ENCODE measurements at regions of chr18 and their contacts with region 1.

Region 1: DNA sequence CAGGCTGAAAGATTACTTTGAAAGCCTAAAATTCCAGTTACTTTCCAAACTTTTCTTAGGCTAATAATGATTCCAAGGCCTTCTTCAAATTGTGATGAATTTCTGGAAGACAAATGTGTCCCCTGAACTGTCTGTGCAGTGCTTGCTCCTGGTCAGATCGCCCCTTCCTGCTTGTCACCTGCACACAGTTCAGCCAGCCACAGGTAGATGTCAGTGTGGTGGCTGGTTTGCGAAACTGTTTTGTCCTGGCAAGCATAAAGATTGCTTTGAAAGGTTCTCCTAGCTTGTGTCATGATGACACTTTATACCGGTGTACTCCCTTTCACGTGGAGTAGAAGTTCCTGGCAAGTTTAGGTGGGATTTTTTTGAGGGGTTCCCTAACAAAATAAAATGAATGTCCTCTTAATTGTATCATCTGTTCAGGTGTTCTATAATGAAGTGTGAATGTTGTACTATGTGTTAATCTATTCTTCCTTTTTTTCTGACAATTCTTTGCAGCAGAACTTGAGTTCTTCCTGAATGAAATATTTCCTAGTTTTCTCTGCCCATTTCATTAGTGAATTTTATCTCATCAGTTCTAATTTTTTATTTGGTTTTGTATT is 298.8 kb downstream of the ZNF407 start:
- DNase-seq: peak; percentile 9
- ATAC-seq: peak; percentile 43
- H3K4me3 ChIP-seq: no peak overlapping the region
- H3K4me3 Mint-ChIP-seq: no peak overlapping the region
- H3K27ac ChIP-seq: no peak overlapping the region
- H3K27ac Mint-ChIP-seq: no peak overlapping the region
- H3K4me1 ChIP-seq: no peaks in the 10 kb centered on the region
- H3K4me1 Mint-ChIP-seq: no peaks in the 10 kb centered on the region
- H3K27me3 ChIP-seq: no peaks in the 10 kb centered on the region
- H3K27me3 Mint-ChIP-seq: no peaks in the 10 kb centered on the region
- CTCF ChIP-seq: peak; percentile 15

Region 2: GRCh38 chr18:74963820-74964446 is 67.4 kb after region 1 on chr18:
- CTCF ChIA-PET with region 1: interaction called, 10 read pairs
- POLR2A ChIA-PET with region 1: no interaction called
- intact Hi-C with region 1: no loop called
- DNase-seq: no peak
- ATAC-seq: no peak
- H3K4me3 ChIP-seq: no peak overlapping the region
- H3K4me3 Mint-ChIP-seq: no peak overlapping the region
- H3K27ac ChIP-seq: no peak overlapping the region
- H3K27ac Mint-ChIP-seq: no peak overlapping the region
- H3K4me1 ChIP-seq: no peaks in the 10 kb centered on the region
- H3K4me1 Mint-ChIP-seq: no peaks in the 10 kb centered on the region
- H3K27me3 ChIP-seq: no peaks in the 10 kb centered on the region
- H3K27me3 Mint-ChIP-seq: no peaks in the 10 kb centered on the region
- CTCF ChIP-seq: no peak

Region 3: DNA sequence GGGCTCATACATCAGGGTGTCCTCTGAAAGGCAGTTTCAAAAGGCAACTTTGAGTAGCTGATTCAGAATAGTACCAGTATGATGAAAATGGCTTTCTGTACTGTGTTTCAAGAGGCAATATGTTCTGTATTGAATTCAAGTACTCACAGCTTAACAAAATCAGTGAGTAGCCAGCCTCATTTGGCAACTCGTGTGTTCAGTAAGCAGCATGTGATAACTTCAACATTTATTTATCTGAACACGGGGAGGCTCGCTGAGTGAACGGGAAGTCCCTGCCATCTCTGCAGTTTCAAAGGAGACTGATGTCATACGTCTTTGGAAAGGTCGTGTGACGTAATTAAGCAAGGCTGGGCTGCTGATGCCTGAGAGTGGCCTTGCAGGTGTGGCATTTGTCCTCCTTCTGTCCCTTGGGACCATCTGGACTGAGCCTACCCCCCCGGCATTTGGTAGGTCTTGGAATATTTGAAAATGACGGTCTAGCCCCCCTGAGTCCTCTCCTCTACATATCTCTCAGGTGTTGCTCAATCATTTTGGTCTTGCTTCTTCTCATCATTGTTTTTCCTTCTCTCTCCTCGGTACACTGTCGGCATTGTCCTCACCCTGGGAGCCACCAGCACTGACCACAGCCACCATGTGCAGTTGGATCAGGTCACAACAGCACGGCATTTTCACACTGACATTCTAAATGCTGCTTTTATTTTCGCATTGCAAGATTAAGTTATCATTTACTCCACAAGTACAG is 468.2 kb after region 1 on chr18:
- CTCF ChIA-PET with region 1: no interaction called
- POLR2A ChIA-PET with region 1: no interaction called
- intact Hi-C with region 1: loop called (anchors 5 kb)
- DNase-seq: no peak
- ATAC-seq: no peak
- H3K4me3 ChIP-seq: no peak overlapping the region
- H3K4me3 Mint-ChIP-seq: no peak overlapping the region
- H3K27ac ChIP-seq: no peak overlapping the region
- H3K27ac Mint-ChIP-seq: no peak overlapping the region
- H3K4me1 ChIP-seq: no peaks in the 10 kb centered on the region
- H3K4me1 Mint-ChIP-seq: no peaks in the 10 kb centered on the region
- H3K27me3 ChIP-seq: no peaks in the 10 kb centered on the region
- H3K27me3 Mint-ChIP-seq: peaks cover 4% of the 10 kb centered on the region
- CTCF ChIP-seq: no peak

Region 4: GRCh38 chr18:75478996-75479880 is 582.7 kb after region 1 on chr18:
- CTCF ChIA-PET with region 1: interaction called, 6 read pairs
- POLR2A ChIA-PET with region 1: no interaction called
- intact Hi-C with region 1: loop called (anchors 2 kb)
- DNase-seq: peak; percentile 42
- ATAC-seq: no peak
- H3K4me3 ChIP-seq: no peak overlapping the region
- H3K4me3 Mint-ChIP-seq: no peak overlapping the region
- H3K27ac ChIP-seq: no peak overlapping the region
- H3K27ac Mint-ChIP-seq: no peak overlapping the region
- H3K4me1 ChIP-seq: no peaks in the 10 kb centered on the region
- H3K4me1 Mint-ChIP-seq: no peaks in the 10 kb centered on the region
- H3K27me3 ChIP-seq: no peaks in the 10 kb centered on the region
- H3K27me3 Mint-ChIP-seq: peaks cover 14% of the 10 kb centered on the region
- CTCF ChIP-seq: peak; percentile 55